CD4-positive, alpha-beta memory T cell (primary cell): ENCODE measurements at regions of chr10 and their contacts with region 1.

Region 1: DNA sequence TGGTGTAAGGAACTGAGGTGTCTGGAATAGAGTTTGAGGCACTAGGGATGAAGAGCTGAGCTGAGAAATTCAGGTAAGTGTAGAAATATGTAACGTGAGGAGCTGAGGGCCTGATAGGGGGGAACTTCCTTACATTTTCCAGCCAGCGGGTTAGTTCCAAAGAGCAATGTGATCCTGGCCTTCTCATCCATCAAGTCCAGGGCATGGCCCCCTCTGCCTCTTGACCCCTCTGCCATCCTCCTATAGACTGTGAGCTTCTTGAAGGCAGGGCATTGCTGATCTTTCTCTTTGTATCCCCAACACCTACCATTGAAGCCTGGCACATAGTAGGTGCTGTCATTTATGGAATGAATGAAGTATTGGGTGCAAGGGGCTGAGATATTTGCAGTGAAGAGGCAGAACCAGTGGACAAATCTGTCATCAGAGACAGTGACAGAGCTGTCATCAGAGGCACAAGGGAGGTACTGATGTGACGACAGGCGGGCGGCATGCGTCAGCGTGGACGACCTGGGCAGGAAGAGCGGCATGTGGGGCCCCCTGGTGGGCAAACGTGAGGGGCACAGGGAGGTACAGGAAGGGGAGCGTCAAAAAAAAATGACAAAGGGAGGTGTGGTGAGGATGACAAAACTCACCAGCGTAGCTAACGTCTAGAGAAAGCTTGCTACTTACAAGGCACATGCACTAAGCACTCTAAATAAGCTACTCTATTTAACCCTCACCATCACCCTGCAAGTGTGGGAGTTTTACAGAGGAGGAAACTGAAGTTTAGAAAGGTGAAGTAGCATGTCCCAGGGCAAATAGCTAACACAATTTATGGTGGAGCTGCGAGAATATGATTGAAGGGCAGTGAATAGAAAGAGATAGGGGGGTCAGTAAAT is 5.2 kb upstream of the CAMK2G start:
- DNase-seq: peak; percentile 95 to 96 (median 96)
- H3K4me3 ChIP-seq: no peak overlapping the region
- H3K4me3 Mint-ChIP-seq: peak overlapping the region in 2 of 8 donors; percentile 12 to 52
- H3K27ac ChIP-seq: peak overlapping the region; percentile 50
- H3K27ac Mint-ChIP-seq: peak overlapping the region; percentile 56 to 99 (median 95)
- H3K4me1 ChIP-seq: peaks cover 37% of the 10 kb centered on the region
- H3K4me1 Mint-ChIP-seq: peaks cover 17 to 47% (median 31%) of the 10 kb centered on the region in 4 donors
- H3K27me3 ChIP-seq: no peaks in the 10 kb centered on the region
- H3K27me3 Mint-ChIP-seq: no peaks in the 10 kb centered on the region

Region 2: GRCh38 chr10:73723516-73723915 is 156.0 kb before region 1 on chr10:
- CTCF ChIA-PET with region 1: no interaction called
- POLR2A ChIA-PET with region 1: no interaction called
- intact Hi-C with region 1: no loop called
- DNase-seq: no peak
- H3K4me3 ChIP-seq: no peak overlapping the region
- H3K4me3 Mint-ChIP-seq: no peak overlapping the region
- H3K27ac ChIP-seq: no peak overlapping the region
- H3K27ac Mint-ChIP-seq: peak overlapping the region in 1 of 7 donors; percentile 8
- H3K4me1 ChIP-seq: no peaks in the 10 kb centered on the region
- H3K4me1 Mint-ChIP-seq: peaks cover 0 to 6% (median 2%) of the 10 kb centered on the region in 4 donors
- H3K27me3 ChIP-seq: no peaks in the 10 kb centered on the region
- H3K27me3 Mint-ChIP-seq: no peaks in the 10 kb centered on the region

Region 3: GRCh38 chr10:73772280-73773151 is 107.0 kb before region 1 on chr10:
- CTCF ChIA-PET with region 1: interaction called, 20 read pairs
- POLR2A ChIA-PET with region 1: interaction called, 29 read pairs
- intact Hi-C with region 1: loop called (anchors 1 kb)
- DNase-seq: peak; percentile 82 to 88 (median 86)
- H3K4me3 ChIP-seq: peak overlapping the region; percentile 92 to 95
- H3K4me3 Mint-ChIP-seq: peak overlapping the region; percentile 93 to 99 (median 96)
- H3K27ac ChIP-seq: peak overlapping the region; percentile 86
- H3K27ac Mint-ChIP-seq: peak overlapping the region; percentile 84 to 98 (median 96)
- H3K4me1 ChIP-seq: peaks cover 62% of the 10 kb centered on the region
- H3K4me1 Mint-ChIP-seq: peaks cover 36 to 83% (median 50%) of the 10 kb centered on the region in 4 donors
- H3K27me3 ChIP-seq: no peaks in the 10 kb centered on the region
- H3K27me3 Mint-ChIP-seq: no peaks in the 10 kb centered on the region

Region 4: GRCh38 chr10:73837072-73837471 is 42.5 kb before region 1 on chr10:
- CTCF ChIA-PET with region 1: interaction called, 20 read pairs
- POLR2A ChIA-PET with region 1: interaction called, 3 read pairs
- intact Hi-C with region 1: no loop called
- DNase-seq: no peak
- H3K4me3 ChIP-seq: no peak overlapping the region
- H3K4me3 Mint-ChIP-seq: no peak overlapping the region
- H3K27ac ChIP-seq: no peak overlapping the region
- H3K27ac Mint-ChIP-seq: peak overlapping the region in 3 of 7 donors; percentile 4 to 42 (median 42)
- H3K4me1 ChIP-seq: no peaks in the 10 kb centered on the region
- H3K4me1 Mint-ChIP-seq: no peaks in the 10 kb centered on the region
- H3K27me3 ChIP-seq: no peaks in the 10 kb centered on the region
- H3K27me3 Mint-ChIP-seq: no peaks in the 10 kb centered on the region

Region 5: GRCh38 chr10:73857446-73857845 is 22.1 kb before region 1 on chr10:
- CTCF ChIA-PET with region 1: interaction called, 612 read pairs
- POLR2A ChIA-PET with region 1: interaction called, 59 read pairs
- intact Hi-C with region 1: loop called (anchors 2 kb)
- DNase-seq: peak in 1 of 5 donors; percentile 58
- H3K4me3 ChIP-seq: no peak overlapping the region
- H3K4me3 Mint-ChIP-seq: peak overlapping the region; percentile 20 to 84 (median 39)
- H3K27ac ChIP-seq: no peak overlapping the region
- H3K27ac Mint-ChIP-seq: peak overlapping the region; percentile 81 to 91 (median 86)
- H3K4me1 ChIP-seq: peaks cover 53% of the 10 kb centered on the region
- H3K4me1 Mint-ChIP-seq: peaks cover 36 to 72% (median 50%) of the 10 kb centered on the region in 4 donors
- H3K27me3 ChIP-seq: no peaks in the 10 kb centered on the region
- H3K27me3 Mint-ChIP-seq: no peaks in the 10 kb centered on the region

Region 6: DNA sequence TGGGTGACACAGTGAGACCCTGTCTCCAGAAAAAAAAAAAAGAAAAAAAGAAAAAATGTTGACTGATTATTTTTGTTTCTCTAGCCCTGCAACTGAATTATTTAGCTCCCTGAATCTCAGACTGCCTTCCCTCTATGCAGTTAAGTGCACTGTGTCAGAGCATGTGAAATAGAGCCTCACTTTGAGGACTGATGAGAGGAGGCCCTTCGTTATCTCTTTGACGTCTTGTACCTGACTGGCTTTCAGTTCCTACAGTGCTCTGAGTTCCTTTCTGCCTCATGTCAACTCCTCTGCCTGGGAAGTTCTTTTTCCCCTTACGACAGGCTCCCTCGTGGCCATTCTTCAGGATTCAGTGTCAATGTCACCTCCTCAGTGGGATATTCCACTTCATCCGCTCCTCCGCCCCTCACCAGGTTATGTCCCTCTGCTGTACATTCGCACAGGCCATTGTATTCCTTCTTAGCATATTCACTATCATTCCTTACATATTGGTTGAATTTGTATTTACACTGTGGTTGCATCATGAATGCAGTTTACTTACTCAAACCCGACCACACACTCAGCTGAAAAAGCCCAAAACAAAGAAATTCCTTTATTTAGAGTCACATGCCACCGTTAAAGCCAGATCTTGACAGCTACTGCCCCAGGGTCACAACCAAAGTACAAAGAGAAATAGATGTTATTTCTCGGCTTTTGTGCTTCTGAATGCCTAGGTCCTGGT is 12.9 kb after region 1 on chr10:
- CTCF ChIA-PET with region 1: interaction called, 18 read pairs
- POLR2A ChIA-PET with region 1: no interaction called
- intact Hi-C with region 1: no loop called
- DNase-seq: no peak
- H3K4me3 ChIP-seq: no peak overlapping the region
- H3K4me3 Mint-ChIP-seq: no peak overlapping the region
- H3K27ac ChIP-seq: no peak overlapping the region
- H3K27ac Mint-ChIP-seq: no peak overlapping the region
- H3K4me1 ChIP-seq: no peaks in the 10 kb centered on the region
- H3K4me1 Mint-ChIP-seq: no peaks in the 10 kb centered on the region
- H3K27me3 ChIP-seq: no peaks in the 10 kb centered on the region
- H3K27me3 Mint-ChIP-seq: no peaks in the 10 kb centered on the region

Region 7: DNA sequence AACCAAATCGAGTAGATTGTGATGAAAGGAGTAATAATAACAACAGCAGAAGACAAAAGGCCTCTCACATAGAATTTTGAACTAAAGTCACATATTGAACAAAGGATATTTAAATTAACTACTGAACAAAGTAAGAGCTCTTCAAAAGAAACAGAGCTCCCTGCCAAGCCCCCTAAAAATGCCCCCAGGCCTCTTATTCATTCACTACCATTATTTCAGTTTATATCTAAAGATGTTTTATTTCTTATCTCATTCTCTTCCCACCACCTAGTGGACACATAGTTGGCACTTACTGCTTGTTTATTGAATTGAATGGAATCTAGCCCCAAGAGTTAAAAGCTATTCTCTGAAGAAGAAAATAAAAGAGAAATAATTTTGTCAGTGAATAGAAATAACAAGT is 155.8 kb after region 1 on chr10:
- CTCF ChIA-PET with region 1: interaction called, 17 read pairs
- POLR2A ChIA-PET with region 1: no interaction called
- intact Hi-C with region 1: no loop called
- DNase-seq: peak in 1 of 5 donors; percentile 14
- H3K4me3 ChIP-seq: no peak overlapping the region
- H3K4me3 Mint-ChIP-seq: no peak overlapping the region
- H3K27ac ChIP-seq: no peak overlapping the region
- H3K27ac Mint-ChIP-seq: peak overlapping the region in 6 of 7 donors; percentile 31 to 90 (median 80)
- H3K4me1 ChIP-seq: peaks cover 41% of the 10 kb centered on the region
- H3K4me1 Mint-ChIP-seq: peaks cover 43 to 64% (median 48%) of the 10 kb centered on the region in 4 donors
- H3K27me3 ChIP-seq: no peaks in the 10 kb centered on the region
- H3K27me3 Mint-ChIP-seq: no peaks in the 10 kb centered on the region

Region 8: DNA sequence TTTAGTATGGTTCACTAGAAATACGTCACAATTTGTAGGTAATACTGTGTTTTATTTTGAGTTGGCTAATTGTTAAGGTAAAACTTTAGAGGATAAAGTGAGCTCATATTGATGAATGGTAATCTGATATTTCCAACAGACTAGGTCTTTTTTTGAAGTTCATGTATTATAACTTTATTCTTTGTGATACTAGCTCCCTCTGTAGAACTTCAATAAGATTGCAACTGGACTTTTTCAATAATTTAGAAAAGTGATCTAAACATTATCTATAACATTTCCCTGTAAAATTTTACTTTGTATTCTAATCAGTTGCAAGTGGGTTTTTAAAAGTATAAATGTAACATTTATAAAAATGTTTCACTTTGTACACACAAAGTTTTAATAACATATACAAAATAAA is 355.0 kb after region 1 on chr10:
- CTCF ChIA-PET with region 1: interaction called, 8 read pairs
- POLR2A ChIA-PET with region 1: no interaction called
- intact Hi-C with region 1: loop called (anchors 10 kb)
- DNase-seq: peak in 4 of 5 donors; percentile 18 to 39 (median 28)
- H3K4me3 ChIP-seq: no peak overlapping the region
- H3K4me3 Mint-ChIP-seq: no peak overlapping the region
- H3K27ac ChIP-seq: no peak overlapping the region
- H3K27ac Mint-ChIP-seq: peak overlapping the region in 1 of 7 donors; percentile 13
- H3K4me1 ChIP-seq: no peaks in the 10 kb centered on the region
- H3K4me1 Mint-ChIP-seq: peaks cover 0 to 16% (median 8%) of the 10 kb centered on the region in 4 donors
- H3K27me3 ChIP-seq: no peaks in the 10 kb centered on the region
- H3K27me3 Mint-ChIP-seq: no peaks in the 10 kb centered on the region